K562 (cell line): ENCODE measurements at regions of chr16 and their contacts with region 1.

Region 1: GRCh38 chr16:30984669-30985400 is at the start of gene HSD3B7:
- DNase-seq: peak; percentile 92 to 95 (median 93)
- ATAC-seq: peak; percentile 95
- H3K4me3 ChIP-seq: peak within 1 kb of the TSS; percentile 44
- H3K27ac ChIP-seq: peak within 1 kb of the TSS; percentile 51
- H3K4me1 ChIP-seq: peaks cover 7 to 68% of the 10 kb centered on the region in 2 experiments; a peak in 4 of 5 replicates
- H3K27me3 ChIP-seq: no peaks in the 10 kb centered on the region
- CTCF ChIP-seq: peak; percentile 90 to 95 (median 92)
- EP300 ChIP-seq: peak; percentile 7; the same call in 1 of the 2 replicates
- POLR2A ChIP-seq: peak; percentile 58
- RAD21 ChIP-seq: peak; percentile 91 to 92
- polyA plus RNA-seq, gene HSD3B7: 5.4 to 6.7 TPM

Region 2: GRCh38 chr16:31016018-31016417 is 31.2 kb after region 1 on chr16:
- CTCF ChIA-PET with region 1: no interaction called
- POLR2A ChIA-PET with region 1: no interaction called
- in situ Hi-C with region 1: no loop called
- intact Hi-C with region 1: loop called (anchors 2 kb)
- DNase-seq: no peak
- ATAC-seq: peak; percentile 50
- H3K4me3 ChIP-seq: no peak overlapping the region
- H3K27ac ChIP-seq: no peak overlapping the region
- H3K4me1 ChIP-seq: peaks cover under 1 to 6% of the 10 kb centered on the region in 2 experiments; a peak in 4 of 5 replicates
- H3K27me3 ChIP-seq: peaks cover 10 to 14% of the 10 kb centered on the region in 2 experiments; a peak in 4 of 5 replicates
- CTCF ChIP-seq: peak in 2 of 3 experiments; percentile 23 to 25; a peak in 2 of 6 replicates
- EP300 ChIP-seq: no peak
- POLR2A ChIP-seq: no peak
- RAD21 ChIP-seq: no peak

Region 3: DNA sequence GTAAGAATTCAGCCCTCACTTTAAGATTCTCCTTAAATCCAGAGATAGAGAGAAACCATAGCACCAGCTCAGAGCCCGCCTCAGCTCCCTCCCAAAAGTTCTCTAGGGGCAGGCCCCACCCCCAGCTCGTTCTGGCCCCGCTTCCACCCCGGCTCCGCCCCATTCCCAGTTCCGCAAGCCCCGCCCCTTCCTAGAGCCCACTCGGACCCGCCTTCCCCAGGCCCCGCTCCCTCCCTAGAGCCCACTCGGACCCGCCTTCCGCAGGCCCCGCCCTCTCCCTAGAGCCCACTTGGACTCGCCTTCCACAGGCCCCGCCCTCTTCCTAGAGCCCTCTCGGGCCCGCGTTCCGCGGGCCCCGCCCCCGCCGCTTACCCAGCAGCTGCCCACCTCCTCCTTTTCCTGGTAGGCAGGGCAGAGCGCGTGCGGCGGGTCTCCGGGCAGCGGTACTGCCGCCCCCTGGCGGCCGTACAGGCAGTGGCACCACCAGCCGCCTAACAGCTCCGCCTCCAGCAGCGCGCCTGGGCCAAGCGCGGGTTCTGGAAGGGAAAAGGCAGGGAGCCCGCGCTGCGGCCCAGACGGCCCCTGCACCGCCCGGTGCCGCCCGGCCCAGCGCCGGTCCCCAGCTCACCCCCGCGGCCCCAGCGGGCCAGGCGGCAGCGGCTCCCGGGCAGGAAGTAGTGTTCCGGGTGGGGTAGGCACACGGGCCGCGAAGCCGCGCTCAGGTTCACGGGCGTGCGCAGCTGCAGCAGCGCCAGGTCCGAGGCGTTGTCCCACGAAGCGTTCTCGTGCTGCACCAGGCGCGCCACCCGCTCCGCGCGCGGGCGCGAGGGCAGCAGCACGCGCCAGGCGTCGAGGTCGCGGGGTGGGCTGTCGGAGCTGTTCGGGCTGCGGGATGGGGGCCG is 157.5 kb after region 1 on chr16:
- CTCF ChIA-PET with region 1: no interaction called
- POLR2A ChIA-PET with region 1: interaction called, 3 read pairs
- in situ Hi-C with region 1: no loop called
- intact Hi-C with region 1: loop called (anchors 10 kb)
- DNase-seq: peak; percentile 99 to 100 (median 100)
- ATAC-seq: peak; percentile 97
- H3K4me3 ChIP-seq: peak overlapping the region; percentile 28
- H3K27ac ChIP-seq: peak overlapping the region; percentile 67
- H3K4me1 ChIP-seq: peaks cover 14 to 43% of the 10 kb centered on the region in 2 experiments
- H3K27me3 ChIP-seq: peaks cover 13 to 19% of the 10 kb centered on the region in 2 experiments; a peak in 4 of 5 replicates
- CTCF ChIP-seq: peak; percentile 89 to 95 (median 93)
- EP300 ChIP-seq: no peak
- POLR2A ChIP-seq: peak; percentile 65
- RAD21 ChIP-seq: peak; percentile 91 to 94

Region 4: DNA sequence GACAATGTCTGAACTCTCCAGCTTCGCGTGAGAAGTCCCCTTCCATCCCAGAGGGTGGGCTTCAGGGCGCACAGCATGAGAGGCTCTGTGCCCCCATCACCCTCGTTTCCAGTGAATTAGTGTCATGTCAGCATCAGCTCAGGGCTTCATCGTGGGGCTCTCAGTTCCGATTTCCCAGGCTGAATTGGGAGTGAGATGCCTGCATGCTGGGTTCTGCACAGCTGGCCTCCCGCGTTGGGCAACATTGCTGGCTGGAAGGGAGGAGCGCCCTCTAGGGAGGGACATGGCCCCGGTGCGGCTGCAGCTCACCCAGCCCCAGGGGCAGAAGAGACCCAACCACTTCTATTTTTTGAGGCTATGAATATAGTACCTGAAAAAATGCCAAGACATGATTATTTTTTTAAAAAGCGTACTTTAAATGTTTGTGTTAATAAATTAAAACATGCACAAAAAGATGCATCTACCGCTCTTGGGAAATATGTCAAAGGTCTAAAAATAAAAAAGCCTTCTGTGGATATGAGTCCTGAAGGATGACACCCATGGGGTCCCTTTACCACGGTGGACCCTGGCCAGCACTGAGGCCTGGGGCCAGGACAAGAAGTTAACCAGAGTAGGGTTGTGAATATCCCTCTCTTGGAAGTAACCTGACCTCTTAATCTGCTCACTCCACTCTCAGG is 397.8 kb after region 1 on chr16:
- CTCF ChIA-PET with region 1: interaction called, 15 read pairs
- POLR2A ChIA-PET with region 1: no interaction called
- in situ Hi-C with region 1: no loop called
- intact Hi-C with region 1: no loop called
- DNase-seq: peak; percentile 71 to 82 (median 72)
- ATAC-seq: peak; percentile 96
- H3K4me3 ChIP-seq: no peak overlapping the region
- H3K27ac ChIP-seq: no peak overlapping the region
- H3K4me1 ChIP-seq: peaks cover 0 to 5% of the 10 kb centered on the region in 2 experiments; a peak in 2 of 5 replicates
- H3K27me3 ChIP-seq: peaks cover 3 to 34% of the 10 kb centered on the region in 2 experiments; a peak in 4 of 5 replicates
- CTCF ChIP-seq: peak; percentile 82 to 90 (median 86)
- EP300 ChIP-seq: no peak
- POLR2A ChIP-seq: no peak
- RAD21 ChIP-seq: peak; percentile 56 to 83

Region 5: GRCh38 chr16:31440516-31441184 is 455.8 kb after region 1 on chr16:
- CTCF ChIA-PET with region 1: no interaction called
- POLR2A ChIA-PET with region 1: no interaction called
- in situ Hi-C with region 1: loop called (anchors 25 kb)
- intact Hi-C with region 1: loop called (anchors 2 kb)
- DNase-seq: no peak
- ATAC-seq: no peak
- H3K4me3 ChIP-seq: no peak overlapping the region
- H3K27ac ChIP-seq: no peak overlapping the region
- H3K4me1 ChIP-seq: peaks cover 3 to 25% of the 10 kb centered on the region in 2 experiments; a peak in 2 of 5 replicates
- H3K27me3 ChIP-seq: no peaks in the 10 kb centered on the region; a peak in 1 of 5 replicates
- CTCF ChIP-seq: no peak
- EP300 ChIP-seq: no peak
- POLR2A ChIP-seq: no peak
- RAD21 ChIP-seq: no peak

Region 6: DNA sequence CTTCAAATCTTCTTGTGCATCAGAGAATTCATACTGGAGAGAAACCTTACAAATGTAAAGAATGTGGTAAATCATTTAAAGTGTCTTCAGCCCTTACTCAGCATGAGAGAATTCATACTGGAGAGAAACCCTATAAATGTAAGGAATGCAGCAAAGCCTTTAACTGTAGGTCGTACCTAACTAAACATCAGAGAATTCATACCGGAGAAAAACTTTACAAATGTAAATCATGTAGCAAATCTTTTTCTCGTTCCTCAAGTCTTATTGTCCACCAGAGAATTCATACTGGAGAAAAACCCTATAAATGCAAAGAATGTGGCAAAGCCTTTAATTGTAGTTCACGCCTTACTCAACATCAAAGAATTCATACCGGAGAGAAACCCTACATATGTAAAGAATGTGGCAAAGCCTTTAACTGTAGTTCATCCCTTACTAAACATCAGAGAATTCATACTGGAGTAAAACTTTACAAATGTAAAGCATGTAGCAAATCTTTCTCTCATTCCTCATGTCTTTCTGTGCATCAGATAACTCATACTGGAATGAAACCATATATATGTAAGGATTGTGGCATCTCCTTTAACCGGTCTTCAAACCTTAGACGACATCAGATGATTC is 770.3 kb after region 1 on chr16:
- CTCF ChIA-PET with region 1: no interaction called
- POLR2A ChIA-PET with region 1: no interaction called
- in situ Hi-C with region 1: no loop called
- intact Hi-C with region 1: no loop called
- DNase-seq: no peak
- ATAC-seq: no peak
- H3K4me3 ChIP-seq: no peak overlapping the region
- H3K27ac ChIP-seq: no peak overlapping the region
- H3K4me1 ChIP-seq: no peaks in the 10 kb centered on the region
- H3K27me3 ChIP-seq: no peaks in the 10 kb centered on the region
- CTCF ChIP-seq: no peak
- EP300 ChIP-seq: no peak
- POLR2A ChIP-seq: no peak
- RAD21 ChIP-seq: no peak